Body of pancreas (tissue), 4 donors: ENCODE measurements at regions of chr6 and their contacts with region 1.

Region 1: DNA sequence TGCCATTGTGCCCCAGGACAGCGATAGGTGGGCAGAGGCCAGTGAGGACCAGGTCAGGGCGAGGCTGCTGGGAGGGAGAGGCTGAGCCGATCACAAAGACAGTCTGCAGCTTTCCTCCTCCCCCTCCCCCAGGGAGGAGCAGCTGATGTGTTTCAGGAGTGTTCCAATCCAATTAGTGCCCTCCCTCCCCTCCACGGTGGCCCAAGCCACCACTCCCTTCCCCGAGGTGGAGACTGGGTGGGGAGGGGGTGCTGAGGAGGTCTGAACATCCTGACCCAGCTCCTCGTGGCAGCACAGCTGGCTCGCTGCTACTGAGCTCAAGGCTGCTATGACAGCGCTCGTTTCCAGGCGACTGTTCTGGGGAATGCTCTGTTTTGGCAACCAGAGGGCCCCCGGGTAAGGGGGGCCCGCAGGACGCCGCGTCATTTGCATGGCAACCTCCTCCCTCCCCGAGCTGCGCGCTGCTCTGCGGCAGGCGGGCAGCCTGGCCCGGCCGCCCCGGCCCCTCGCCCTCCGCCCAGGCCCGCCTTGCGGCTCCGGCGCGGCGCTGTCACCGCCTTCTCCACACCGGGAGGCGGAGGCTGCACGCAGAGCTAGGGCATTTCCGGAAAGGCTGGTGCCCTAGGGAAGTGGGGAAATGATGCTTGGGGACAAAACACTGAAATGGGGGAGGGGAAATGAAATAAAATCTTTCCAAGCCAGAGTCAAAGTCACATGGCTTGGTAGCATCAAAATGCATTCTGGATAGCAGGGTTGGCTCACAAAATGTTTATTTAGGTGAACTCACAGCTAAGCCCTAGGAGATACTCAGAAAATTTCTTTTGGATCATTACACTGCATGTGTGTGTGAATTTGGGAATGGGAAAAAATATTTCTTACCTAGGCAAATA is 67.4 kb upstream of the PIM1 start:
- DNase-seq: peak; percentile 88 to 93 (median 90)
- ATAC-seq: peak; percentile 82
- H3K4me3 ChIP-seq: no peak overlapping the region
- H3K27ac ChIP-seq: peak overlapping the region; percentile 85 to 98 (median 90)
- H3K4me1 ChIP-seq: peaks cover 32% of the 10 kb centered on the region
- H3K27me3 ChIP-seq: no peaks in the 10 kb centered on the region
- CTCF ChIP-seq: no peak
- POLR2A ChIP-seq: peak in 2 of 3 donors; percentile 9 to 40

Region 2: DNA sequence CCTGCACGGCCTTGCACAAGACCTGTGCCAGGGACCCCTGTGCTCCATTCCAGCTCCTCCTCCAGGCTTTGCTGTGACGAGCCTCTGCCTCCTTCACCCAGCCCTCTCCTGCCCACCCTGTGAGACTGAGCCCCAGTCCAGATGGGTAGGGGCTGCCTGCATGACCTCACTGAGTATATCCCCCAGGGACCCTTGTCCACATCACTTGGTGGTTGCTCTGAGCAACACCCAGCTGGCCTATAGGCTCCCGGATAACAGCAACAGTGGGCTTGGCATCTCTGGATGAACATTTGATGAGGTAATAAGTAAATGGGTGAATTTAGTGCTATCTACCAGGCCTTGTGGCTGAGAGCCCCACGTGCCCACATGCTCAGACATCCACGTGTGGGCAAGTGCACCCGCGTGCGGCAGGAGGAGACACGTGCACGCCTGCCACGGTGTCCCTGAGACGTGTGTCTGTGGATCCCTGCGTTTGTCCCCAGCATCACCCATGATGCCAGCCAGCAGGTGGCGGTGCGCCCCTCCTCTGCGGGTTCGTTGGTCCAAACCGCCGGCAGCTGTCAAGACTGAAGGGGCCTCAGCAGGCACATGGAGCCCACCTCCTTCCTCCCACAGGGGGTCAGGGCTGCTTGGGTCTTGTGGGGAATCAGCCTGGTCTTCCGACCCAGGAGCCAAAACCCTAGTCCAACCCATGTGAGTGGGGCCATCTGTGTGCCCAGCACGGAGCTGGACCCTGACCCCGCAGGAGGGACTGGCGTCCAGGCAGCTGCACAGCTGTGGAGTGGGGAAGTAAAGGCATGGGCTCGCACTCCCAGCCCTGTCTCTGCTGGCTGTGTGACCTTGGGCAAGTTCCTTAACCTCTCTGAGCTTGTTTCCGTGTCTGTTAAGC is 51.1 kb before region 1 on chr6:
- intact Hi-C with region 1: loop called (anchors 10 kb)
- DNase-seq: peak; percentile 89 to 91 (median 90)
- ATAC-seq: peak; percentile 69
- H3K4me3 ChIP-seq: no peak overlapping the region
- H3K27ac ChIP-seq: peak overlapping the region in 1 of 4 donors; percentile 77
- H3K4me1 ChIP-seq: peaks cover 54% of the 10 kb centered on the region
- H3K27me3 ChIP-seq: no peaks in the 10 kb centered on the region
- CTCF ChIP-seq: peak; percentile 84 to 96 (median 92)
- POLR2A ChIP-seq: no peak

Region 3: DNA sequence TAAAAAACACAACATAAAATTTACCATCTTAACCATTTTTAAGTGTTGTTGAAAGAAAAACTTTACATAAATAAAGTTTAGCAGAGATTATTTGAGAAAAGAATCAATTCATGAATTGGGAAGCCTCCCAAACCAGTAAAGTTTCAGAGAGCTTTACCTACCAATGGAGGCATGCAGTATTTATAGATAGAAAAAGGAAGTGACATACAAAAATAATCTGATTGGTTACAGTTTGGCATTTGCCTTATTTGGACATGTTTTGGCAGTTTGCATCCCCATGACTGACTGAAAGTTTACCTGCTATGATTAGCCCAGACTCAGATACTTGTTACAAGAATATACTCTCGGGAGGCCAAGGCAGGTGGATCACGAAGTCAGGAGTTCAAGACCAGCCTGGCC is 326.8 kb after region 1 on chr6:
- intact Hi-C with region 1: no loop called
- DNase-seq: no peak
- ATAC-seq: no peak
- H3K4me3 ChIP-seq: no peak overlapping the region
- H3K27ac ChIP-seq: no peak overlapping the region
- H3K4me1 ChIP-seq: peaks cover 16% of the 10 kb centered on the region
- H3K27me3 ChIP-seq: no peaks in the 10 kb centered on the region
- CTCF ChIP-seq: no peak
- POLR2A ChIP-seq: no peak